HEK293T (cell line): ENCODE measurements at regions of chr10 and their contacts with region 1.

Region 1: DNA sequence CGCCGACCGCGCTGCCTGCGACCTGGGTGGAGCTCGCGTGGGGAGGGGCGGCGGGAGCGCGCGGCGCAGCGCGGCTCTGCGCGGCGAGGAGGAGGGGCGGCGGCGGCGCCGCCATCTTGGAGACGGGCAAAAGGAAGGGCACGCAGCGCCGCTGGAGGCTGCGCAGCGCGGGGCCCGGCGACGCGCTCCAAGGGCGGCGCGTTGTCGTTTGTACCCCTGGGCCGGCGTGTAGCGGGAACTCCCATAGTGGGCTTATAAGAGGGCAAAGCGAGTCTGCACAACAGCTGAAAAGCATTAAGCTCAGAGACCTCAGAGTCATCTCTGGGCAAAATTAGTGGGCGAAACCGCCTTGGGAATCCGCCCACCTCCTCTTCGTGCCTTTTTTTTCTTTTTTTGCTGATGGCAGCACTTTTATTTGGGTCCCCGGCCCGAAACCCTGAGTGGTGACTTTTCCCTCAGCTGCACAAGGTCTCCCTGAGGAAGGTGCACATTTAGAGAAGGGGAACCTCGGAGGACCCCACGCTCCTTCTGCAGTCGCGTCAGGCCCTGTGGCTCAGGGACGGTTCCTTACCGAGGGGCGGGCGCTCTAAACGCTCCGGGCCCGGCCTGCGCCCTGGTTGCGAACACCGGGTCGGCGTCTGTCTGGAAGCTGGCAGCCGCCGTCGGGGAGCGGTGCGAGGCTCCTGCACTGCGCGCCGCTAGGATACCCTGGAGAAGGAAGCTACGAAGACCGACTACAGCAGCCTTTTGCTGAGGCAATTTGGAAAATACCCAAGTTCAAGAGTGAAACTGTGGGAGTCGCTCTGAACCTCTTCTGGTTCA is 428 bp upstream of the MCMBP start:
- DNase-seq: peak; percentile 90

Region 2: GRCh38 chr10:119892188-119893065 is 19.4 kb after region 1 on chr10 and contains the start of gene SEC23IP:
- CTCF ChIA-PET with region 1: interaction called, 3 read pairs
- POLR2A ChIA-PET with region 1: interaction called, 28 read pairs
- DNase-seq: peak; percentile 98

Region 3: GRCh38 chr10:120105001-120105400 is 231.9 kb after region 1 on chr10:
- CTCF ChIA-PET with region 1: no interaction called
- POLR2A ChIA-PET with region 1: no interaction called
- DNase-seq: no peak